HCT116 (cell line): ENCODE measurements at regions of chr12 and their contacts with region 1.

Region 1: DNA sequence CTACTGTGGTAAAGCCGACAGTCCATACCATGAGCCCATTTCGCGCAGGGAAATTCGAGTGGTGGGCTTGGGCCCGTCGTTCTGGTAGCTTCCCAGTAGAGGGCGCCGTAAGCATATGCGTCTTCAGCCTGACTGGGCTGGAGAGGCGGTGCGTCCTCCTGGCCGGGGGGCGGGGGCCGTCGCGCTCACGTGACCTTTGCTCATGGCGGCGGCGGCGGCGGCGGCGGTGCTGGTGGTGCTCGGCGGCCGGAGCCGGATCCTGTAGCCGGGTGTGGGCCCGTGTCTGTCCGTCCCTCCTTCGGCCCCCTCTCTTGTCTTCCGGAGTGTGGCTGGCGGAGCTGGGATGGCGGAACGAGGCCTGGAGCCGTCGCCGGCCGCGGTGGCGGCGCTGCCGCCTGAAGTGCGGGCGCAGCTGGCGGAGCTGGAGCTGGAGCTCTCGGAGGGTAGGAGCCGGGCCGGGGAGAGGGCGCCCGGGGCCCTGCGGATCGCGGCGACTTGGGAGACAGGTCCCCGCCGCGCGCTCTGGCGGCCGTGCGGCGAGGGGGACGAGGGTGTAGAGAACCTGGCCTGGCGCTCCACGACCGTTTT is at the start of gene DIP2B:
- DNase-seq: peak; percentile 71
- ATAC-seq: peak; percentile 93
- H3K4me3 ChIP-seq: peak within 1 kb of the TSS; percentile 77 to 90
- H3K27ac ChIP-seq: peak within 1 kb of the TSS; percentile 84
- H3K4me1 ChIP-seq: peaks cover 0 to 19% of the 10 kb centered on the region in 2 experiments; a peak in 3 of 4 replicates
- H3K27me3 ChIP-seq: no peaks in the 10 kb centered on the region
- CTCF ChIP-seq: peak; percentile 81 to 92 (median 86)
- POLR2A ChIP-seq: peak; percentile 53
- RAD21 ChIP-seq: peak; percentile 99
- total RNA-seq, gene DIP2B: 32.3 TPM

Region 2: GRCh38 chr12:50309950-50310349 is 194.9 kb before region 1 on chr12:
- CTCF ChIA-PET with region 1: no interaction called
- POLR2A ChIA-PET with region 1: no interaction called
- RAD21 ChIA-PET with region 1: no interaction called
- intact Hi-C with region 1: no loop called
- DNase-seq: no peak
- ATAC-seq: no peak
- H3K4me3 ChIP-seq: no peak overlapping the region
- H3K27ac ChIP-seq: no peak overlapping the region
- H3K4me1 ChIP-seq: peaks cover 21 to 43% of the 10 kb centered on the region in 2 experiments
- H3K27me3 ChIP-seq: no peaks in the 10 kb centered on the region
- CTCF ChIP-seq: no peak
- POLR2A ChIP-seq: no peak
- RAD21 ChIP-seq: no peak

Region 3: GRCh38 chr12:50637870-50638481 is 133.1 kb after region 1 on chr12:
- CTCF ChIA-PET with region 1: interaction called, 38 read pairs
- POLR2A ChIA-PET with region 1: no interaction called
- RAD21 ChIA-PET with region 1: interaction called, 4 to 5 read pairs
- intact Hi-C with region 1: loop called (anchors 1 kb)
- DNase-seq: no peak
- ATAC-seq: no peak
- H3K4me3 ChIP-seq: no peak overlapping the region
- H3K27ac ChIP-seq: no peak overlapping the region
- H3K4me1 ChIP-seq: peaks cover 17 to 23% of the 10 kb centered on the region in 2 experiments
- H3K27me3 ChIP-seq: no peaks in the 10 kb centered on the region
- CTCF ChIP-seq: peak; percentile 45 to 82 (median 77); a peak in 5 of 6 replicates
- POLR2A ChIP-seq: no peak
- RAD21 ChIP-seq: peak; percentile 87

Region 4: GRCh38 chr12:50655374-50655921 is 150.6 kb after region 1 on chr12:
- CTCF ChIA-PET with region 1: no interaction called
- POLR2A ChIA-PET with region 1: no interaction called
- RAD21 ChIA-PET with region 1: no interaction called
- intact Hi-C with region 1: no loop called
- DNase-seq: no peak
- ATAC-seq: no peak
- H3K4me3 ChIP-seq: no peak overlapping the region
- H3K27ac ChIP-seq: no peak overlapping the region
- H3K4me1 ChIP-seq: peaks cover 4 to 5% of the 10 kb centered on the region in 2 experiments; a peak in 3 of 4 replicates
- H3K27me3 ChIP-seq: no peaks in the 10 kb centered on the region
- CTCF ChIP-seq: no peak
- POLR2A ChIP-seq: no peak
- RAD21 ChIP-seq: no peak

Region 5: DNA sequence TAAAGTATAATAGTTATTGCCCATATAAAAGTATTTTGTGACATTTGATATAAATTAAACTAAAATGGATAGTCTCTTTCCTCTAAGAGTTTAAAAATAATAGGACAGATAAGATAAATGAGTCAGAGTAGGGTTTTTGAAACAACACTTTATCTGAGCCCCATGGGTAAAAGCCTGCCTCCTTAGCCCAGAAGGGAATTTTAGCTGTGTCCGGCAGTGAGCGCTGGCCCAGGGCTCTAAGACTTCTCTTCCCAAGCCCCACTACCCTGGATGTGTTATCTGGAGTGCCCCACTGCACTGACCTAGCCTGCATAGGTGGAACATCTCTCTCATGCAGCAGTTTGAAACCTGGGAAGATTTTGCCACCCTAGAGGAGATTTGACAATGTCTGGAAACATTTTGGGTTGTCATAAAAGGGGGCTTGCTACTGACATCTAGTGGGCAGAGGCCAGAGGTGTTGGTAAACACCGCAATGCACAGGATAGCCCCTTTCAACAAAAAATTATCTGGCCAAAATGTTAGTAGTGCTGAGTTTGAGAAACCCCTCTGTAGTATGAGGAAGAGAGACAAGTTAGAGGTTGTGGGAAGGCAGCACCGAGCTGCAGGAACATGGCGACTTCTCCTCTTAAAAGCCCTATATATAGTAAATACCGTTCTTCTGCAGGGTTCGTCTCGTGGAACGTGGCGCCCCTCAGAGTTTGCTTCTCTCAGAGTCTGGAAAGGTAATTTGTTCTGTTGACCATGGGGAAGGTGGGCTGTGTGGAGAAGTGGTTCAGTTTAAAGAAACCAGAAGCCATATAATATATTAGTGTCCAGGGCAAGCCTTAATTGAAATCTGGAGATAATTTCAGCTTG is 229.7 kb after region 1 on chr12:
- CTCF ChIA-PET with region 1: interaction called, 11 read pairs
- POLR2A ChIA-PET with region 1: no interaction called
- RAD21 ChIA-PET with region 1: interaction called in 1 of 2 experiments, 3 read pairs
- intact Hi-C with region 1: loop called (anchors 1 kb)
- DNase-seq: peak; percentile 6
- ATAC-seq: peak; percentile 94
- H3K4me3 ChIP-seq: no peak overlapping the region
- H3K27ac ChIP-seq: no peak overlapping the region
- H3K4me1 ChIP-seq: peaks cover 0 to 8% of the 10 kb centered on the region in 2 experiments; a peak in 1 of 4 replicates
- H3K27me3 ChIP-seq: no peaks in the 10 kb centered on the region
- CTCF ChIP-seq: peak; percentile 67 to 86 (median 84); a peak in 5 of 6 replicates
- POLR2A ChIP-seq: no peak
- RAD21 ChIP-seq: peak; percentile 75